ENCODE measurements at regions of chr6 and their contacts with region 1.

Region 1: DNA sequence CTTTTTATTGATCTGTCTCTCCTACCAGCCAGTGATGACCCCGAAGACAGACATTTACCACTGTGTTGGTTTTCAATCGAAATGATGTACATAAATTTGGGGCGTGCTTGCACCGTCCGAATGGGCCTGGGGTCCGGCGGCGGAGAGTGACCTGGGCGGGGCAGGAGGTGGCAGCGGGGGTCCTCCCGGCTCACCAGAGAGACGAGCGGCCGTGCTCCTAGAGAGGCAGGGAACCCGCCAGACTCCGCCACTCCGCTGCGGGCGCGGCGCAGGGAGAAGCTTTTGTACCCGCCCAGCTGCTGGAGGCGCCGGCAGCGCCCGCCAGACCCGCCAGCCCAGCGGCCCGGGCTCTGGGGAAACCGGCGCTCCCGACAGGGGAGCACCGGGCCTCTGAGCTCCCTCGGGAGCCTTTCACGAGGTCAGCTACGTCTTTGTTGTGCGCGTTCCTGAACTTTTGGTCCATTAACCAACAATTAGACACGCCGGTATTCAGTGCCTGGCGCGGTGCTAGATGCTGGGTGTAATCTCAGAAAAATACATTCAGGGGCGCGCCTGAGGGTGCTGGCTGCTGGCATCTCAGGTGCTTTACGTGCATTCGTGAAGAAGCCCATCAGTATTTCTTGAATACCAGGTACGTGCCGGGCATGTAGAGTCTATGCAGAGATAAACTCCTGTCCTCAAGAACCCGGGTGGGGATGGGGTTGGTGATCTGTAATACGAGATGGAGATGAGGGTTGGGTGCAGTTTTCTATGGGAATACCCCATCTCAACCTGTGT is at the start of gene PGBD1:
- DNase-seq: peak; percentile 87
- ATAC-seq: peak; percentile 96 to 98
- total RNA-seq, gene PGBD1: 2.7 TPM

Region 2: GRCh38 chr6:28303570-28303969 is 22.1 kb after region 1 on chr6:
- intact Hi-C with region 1: no loop called
- DNase-seq: no peak
- ATAC-seq: no peak

Region 3: GRCh38 chr6:28340310-28341095 is 59.0 kb after region 1 on chr6:
- intact Hi-C with region 1: loop called in 1 of 2 experiments (anchors 5 kb)
- DNase-seq: no peak
- ATAC-seq: no peak

Region 4: DNA sequence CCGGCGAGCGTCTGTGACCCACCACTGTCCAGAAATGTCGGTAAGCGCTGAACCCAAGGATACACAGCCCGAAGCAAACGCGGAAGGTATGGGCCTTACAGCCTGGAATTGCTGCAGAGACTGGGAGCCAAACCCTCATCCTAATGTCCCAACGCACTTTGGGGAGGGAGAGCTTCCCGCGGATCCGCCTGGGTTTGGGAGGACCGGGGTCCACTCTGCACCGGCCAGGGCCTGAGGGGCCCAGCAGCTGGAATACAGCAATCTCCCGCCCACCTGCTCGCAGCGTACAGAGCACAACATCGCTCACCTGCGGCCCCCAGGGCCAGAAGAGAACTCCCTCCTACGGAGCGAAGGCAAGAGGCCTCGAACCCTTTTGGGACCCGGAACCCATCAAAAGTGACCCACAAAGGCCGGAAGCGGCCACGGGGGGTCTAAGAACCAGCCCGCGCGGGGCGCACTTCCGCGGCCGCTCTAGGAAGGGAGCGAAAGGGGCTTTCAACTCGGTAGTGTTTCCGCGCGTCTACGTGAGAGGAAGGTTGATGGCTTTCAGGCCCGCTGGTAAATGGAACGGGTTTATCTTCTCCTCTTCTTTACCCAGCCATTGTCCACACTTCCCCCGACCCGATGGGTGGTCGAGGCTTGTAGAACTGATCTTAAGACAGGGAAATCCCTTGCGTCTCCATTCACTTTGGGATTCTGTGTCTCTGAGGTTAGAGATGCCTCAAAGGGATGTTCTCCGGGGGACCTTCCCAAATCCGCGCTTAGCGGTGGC is 118.1 kb after region 1 on chr6 and contains the start of gene ZSCAN12:
- intact Hi-C with region 1: no loop called
- DNase-seq: peak; percentile 88
- ATAC-seq: peak; percentile 97 to 98
- total RNA-seq, gene ZSCAN12: 2.6 to 3.7 TPM

Measured in left cardiac atrium (tissue), 4 donors.